Head of caudate nucleus (tissue), 42 donors: ENCODE measurements at regions of chr17 and their contacts with region 1.

Region 1: DNA sequence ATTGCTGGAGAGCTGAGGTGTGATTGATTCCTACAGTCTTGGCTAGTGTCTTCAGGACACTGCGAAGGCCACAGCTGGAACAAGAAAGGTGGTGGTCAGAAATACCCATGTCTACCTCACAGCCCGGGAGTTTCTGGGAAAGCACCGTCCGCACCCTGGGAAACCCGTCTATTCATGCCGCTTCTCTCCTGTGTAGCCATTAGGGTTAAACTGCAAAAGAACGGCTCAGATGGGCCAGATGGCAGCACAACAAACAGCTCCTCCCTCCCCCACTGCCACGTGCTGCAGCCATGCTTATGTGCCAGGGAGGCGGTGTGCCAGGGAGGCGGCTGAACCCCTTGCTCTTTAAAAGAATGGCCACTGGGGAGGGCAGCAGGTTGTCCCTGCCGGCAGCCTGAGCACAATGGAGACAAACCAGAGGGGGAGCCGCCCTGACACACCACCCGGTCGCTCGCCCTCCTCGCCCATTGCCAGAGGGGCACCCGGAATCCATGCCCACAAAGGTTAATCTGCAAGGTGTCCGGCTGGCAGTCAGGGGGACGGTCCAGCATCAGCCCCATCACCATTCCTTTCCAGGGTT is 65.2 kb downstream of the CYTH1 start:
- DNase-seq: peak; percentile 89 to 98 (median 94)

Region 2: DNA sequence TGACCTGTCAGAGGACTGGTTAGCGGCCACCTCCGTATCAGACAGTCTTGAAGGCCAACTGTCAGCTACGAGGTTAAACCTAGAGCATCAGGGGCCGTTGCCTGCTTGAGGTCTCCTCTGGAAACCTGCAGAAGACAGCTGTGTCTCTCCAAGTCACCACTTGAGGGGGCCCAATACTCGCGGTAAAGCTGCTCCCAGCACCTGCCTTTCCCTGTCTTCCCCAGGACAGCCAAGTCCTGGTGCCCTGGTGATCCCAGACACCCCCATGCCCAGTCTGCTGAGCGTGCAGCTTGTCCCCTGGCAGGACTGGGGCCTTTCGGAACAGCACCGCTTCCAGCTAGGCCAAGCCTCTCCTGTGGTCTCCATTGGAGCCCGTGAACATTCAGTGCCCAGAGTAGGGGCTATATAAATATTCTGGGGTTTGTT is 219.8 kb before region 1 on chr17:
- intact Hi-C with region 1: loop called (anchors 5 kb)
- DNase-seq: peak; percentile 71 to 95 (median 88)

Region 3: GRCh38 chr17:78583091-78583490 is 133.8 kb before region 1 on chr17:
- intact Hi-C with region 1: no loop called
- DNase-seq: no peak

Region 4: GRCh38 chr17:78745407-78746088 is 28.6 kb after region 1 on chr17:
- intact Hi-C with region 1: loop called (anchors 2 kb)
- DNase-seq: peak in 25 of 42 donors; percentile 25 to 89 (median 61)

Region 5: DNA sequence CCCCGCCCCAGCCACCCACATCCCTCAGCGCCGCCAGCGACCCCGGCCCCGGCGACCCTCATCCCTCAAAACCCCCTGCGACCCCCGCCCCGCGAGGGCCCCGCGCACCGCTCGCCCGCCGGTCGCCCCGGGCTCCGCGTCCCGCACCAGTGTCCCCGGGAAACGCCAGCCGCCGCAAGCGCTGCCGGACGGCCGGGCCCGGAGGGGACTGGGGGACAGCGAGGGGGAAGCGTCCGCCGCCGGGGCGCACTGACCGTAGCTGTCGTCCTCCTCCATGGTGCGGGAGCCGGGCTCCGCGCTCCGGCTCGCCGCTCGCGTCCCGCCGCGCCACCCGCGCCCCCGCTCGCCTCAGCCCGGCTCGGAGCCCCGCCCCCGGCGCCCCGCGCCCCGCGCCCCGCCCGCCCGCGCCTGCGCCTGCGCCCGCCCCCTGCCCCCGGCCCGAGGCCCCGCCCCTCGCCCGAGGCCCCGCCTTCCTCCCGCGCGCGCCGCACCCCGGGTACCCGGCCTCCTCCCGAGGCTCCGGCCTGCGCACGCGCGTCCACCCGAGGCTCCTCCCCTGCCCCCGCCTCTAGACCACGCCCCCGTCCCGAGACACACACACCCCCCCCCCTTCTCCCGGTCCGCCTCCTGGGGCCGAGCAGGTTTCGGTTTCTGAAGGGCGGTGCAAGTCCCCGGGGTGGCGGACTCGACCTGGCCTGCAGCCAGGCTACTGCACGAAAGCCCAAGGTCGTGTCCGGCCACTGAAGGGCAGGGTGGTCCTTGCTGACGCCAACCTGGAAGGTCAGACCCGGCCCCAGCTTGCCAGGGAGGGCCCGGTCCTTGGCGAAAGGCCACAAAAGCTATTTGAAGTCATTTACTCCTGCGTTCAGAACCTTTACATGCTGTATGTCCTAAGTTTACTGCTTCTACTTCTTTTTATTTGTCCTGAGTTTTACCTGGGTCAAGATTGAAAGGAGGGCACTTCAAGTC is 65.3 kb after region 1 on chr17 and contains the start of gene CYTH1:
- intact Hi-C with region 1: loop called (anchors 5 kb)
- DNase-seq: peak; percentile 87 to 98 (median 97)

Region 6: DNA sequence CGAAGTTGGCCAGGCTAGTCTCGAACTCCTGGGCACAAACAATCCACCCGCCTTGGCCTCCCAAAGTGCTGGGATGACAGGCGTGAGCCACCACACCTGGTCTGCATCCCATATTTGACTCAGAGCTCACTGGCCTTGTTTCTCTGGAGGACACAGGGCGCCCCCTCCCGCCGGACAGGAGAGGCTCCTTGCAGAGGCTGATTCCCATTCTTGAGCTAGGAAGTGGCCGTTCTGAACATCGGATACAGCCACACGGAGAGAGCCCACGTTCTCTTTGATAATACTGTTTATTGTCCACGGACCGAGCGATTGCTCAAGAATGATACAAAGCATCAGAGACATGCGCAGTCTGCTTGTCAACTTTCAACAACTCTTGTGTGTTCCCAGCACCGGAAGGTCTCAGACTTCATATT is 135.8 kb after region 1 on chr17:
- intact Hi-C with region 1: no loop called
- DNase-seq: no peak